GM10248 (cell line): ENCODE measurements at regions of chr7 and their contacts with region 1.

Region 1: DNA sequence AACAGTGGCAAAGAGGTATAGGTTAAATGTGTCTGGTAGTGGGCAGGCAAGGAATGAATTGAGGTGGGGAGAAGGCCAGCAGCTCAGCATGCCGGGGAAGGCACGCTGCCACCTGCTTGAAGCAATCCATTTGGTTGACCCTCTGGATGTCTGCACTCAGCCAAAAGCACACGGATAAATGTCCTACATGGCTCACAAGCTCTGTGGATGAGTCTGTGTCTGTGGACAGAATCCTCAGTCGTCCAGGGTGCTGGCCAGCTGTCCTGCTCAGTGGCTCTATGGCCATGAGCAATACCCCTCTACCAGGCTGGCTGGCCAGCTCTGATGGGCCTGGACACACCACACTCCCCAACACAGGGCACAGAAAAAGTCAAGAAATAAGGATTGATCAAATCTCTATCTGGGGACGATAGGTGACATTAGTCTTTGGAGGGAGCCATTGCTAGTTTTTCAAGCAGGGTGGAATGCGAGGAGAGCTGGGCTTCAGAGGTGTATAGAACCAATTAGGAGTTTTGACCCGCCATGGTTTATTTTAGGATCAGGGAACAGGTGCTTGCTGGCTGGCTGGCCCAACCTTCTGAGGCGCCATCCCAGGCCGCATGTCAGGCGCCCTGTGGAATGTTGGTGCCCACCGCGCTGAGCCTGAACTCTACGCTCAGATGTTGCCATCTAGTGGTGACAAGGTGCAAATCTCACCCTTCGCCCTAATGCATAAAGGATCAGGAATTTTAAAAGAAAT is 493.4 kb downstream of the TNS3 start:
- DNase-seq: peak; percentile 58
- CTCF ChIP-seq: peak; percentile 80

Region 2: GRCh38 chr7:45917658-45918057 is 1170.8 kb before region 1 on chr7:
- CTCF ChIA-PET with region 1: interaction called, 27 read pairs
- POLR2A ChIA-PET with region 1: no interaction called
- DNase-seq: peak; percentile 82
- CTCF ChIP-seq: peak; percentile 81

Region 3: DNA sequence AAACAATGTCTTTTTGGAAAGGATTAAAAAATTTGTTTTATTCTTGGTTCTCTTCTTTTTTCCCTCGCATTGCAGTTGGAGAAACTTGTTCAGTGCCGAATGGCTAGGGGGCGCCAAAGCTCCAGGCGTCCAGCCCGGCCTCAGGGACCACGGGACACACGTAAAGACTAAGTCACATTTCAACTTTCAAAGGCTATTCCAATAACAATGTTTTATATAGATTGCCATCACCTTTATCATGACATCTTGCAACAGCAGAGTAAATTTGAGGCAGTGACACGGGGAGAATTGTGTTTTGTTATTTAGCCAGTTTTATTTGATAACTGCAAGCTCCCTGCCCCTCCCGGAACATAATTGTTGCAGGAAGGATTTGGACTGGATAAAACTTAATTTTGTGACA is 1165.2 kb before region 1 on chr7:
- CTCF ChIA-PET with region 1: interaction called, 27 read pairs
- POLR2A ChIA-PET with region 1: no interaction called
- DNase-seq: peak; percentile 50
- CTCF ChIP-seq: peak; percentile 89

Region 4: GRCh38 chr7:47074702-47075153 is 13.8 kb before region 1 on chr7:
- CTCF ChIA-PET with region 1: interaction called, 13 read pairs
- POLR2A ChIA-PET with region 1: no interaction called
- DNase-seq: no peak
- CTCF ChIP-seq: no peak

Region 5: DNA sequence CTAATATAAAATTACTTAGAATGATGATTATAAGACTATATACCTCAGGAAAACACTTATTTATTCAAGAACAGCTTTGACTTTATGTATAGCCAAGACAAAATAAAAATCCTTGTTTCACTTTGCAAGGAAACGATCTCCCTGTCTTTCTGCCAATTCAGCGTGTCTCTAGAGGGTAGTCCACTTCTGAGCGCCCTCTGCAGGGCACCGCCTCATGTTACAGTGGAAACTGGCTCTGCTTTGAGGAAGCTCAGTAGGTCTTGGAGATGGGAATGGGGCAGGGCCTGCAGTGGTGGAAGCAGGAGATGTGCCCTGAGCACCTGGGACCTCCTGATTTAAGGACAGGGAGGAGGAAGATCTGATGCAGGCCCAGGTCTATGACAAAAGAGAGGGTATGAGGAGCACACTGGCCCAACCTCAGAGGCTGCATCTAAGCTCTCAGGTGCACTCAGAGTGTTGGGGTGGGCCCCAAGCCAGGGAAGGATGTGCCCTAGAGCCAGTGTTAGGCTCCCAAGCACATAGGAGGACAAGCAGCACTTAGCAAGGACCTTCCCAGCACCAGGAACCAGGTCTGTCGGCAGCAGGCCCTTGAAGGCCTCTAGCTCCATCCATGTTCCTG is 12.4 kb after region 1 on chr7:
- CTCF ChIA-PET with region 1: interaction called, 19 read pairs
- POLR2A ChIA-PET with region 1: no interaction called
- DNase-seq: no peak
- CTCF ChIP-seq: no peak

Region 6: DNA sequence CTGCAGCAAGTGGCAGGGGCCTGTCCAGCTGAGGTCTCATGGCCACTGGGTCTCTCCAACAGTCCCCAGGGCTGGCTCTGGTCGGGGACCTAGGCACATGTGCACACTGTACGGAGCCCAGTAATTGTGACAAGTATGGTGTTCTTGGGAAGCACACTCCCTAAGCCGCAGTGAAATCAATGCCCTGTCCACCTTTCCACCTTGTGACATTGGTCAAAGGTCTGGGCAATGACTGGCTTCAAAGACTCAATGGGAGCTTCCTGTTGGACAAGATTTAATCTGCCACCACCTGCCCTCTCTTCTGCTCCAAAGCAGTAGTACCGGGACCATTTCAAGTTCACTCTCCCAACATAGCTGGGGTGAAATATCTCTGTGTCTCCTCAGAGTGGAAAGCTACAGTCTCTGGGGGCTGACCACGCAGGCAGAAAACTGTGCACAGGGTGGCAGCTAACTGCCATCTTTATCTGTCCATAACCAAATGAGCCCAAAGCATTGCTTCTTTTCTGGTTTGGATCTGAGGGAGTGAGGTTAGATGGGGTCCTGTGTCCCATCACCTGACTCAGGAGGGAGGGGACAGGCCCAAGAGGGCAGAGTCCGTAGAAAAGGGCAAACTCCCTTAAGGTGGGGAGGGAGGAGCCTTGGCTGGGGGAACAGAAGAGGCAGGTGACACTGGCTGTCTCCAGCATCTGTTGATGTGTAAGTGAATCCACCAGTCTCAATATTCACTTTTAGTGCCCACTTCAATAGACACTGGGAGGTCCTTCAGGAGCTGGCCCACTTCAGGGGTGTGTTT is 185.7 kb after region 1 on chr7:
- CTCF ChIA-PET with region 1: no interaction called
- POLR2A ChIA-PET with region 1: no interaction called
- DNase-seq: no peak
- CTCF ChIP-seq: no peak